ENCODE measurements at regions of chr7 and their contacts with region 1.

Region 1: GRCh38 chr7:10604128-10604527 is 369.5 kb upstream of the PHF14 start:
- DNase-seq: no peak

Region 2: DNA sequence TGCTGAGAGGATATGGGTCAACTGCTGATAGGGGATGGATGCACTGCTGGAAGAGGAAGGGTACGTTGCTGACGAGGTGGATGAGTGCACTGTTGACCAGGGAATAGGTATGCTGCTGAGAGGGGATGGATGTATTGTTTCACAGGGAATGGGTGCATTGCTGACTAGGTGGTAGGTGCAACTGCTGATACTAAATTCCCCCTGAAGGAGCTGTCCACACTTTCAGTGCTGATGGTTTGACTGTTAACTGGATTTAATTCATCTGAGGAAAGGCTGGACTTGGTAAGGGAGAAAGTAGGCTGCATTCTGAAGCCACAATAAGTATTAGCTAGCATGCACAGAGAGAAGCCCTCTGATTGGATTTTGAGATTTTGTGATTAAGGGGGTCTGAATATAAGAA is 827.2 kb before region 1 on chr7:
- intact Hi-C with region 1: no loop called
- DNase-seq: peak in 1 of 10 donors; percentile 9

Region 3: DNA sequence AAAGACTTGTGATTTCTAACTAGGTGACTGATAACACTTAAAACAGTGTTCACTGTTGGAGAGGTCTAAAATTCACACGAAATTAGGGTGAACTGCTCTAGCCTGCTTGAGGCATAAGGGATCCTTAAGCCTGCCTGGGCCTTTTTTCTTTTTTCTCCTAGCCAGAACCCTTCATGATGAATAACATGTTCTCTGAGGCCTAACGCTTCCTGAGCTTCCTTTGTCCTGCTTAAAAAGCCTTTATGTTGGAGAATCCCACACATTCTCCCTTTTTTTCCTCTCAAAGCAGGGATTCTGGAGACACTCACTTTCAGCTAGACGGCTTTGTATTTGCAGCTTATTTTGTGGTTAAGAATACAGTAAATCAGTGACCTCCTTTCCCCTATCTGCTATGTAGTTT is 14.8 kb after region 1 on chr7:
- intact Hi-C with region 1: loop called (anchors 1 kb)
- DNase-seq: no peak